H1 (cell line): ENCODE measurements at regions of chr5 and their contacts with region 1.

Region 1: GRCh38 chr5:97142521-97143254 is at the start of gene LIX1:
- DNase-seq: peak in 1 of 2 experiments; percentile 62
- H3K4me3 ChIP-seq: peak within 1 kb of the TSS in 1 of 4 experiments; percentile 12; a peak in 3 of 8 replicates
- H3K27ac ChIP-seq: no peak within 1 kb of the TSS
- H3K4me1 ChIP-seq: peaks cover 0 to 6% (median 2%) of the 10 kb centered on the region in 4 experiments; a peak in 4 of 7 replicates
- H3K27me3 ChIP-seq: no peaks in the 10 kb centered on the region
- CTCF ChIP-seq: peak; percentile 23 to 76 (median 70)
- EP300 ChIP-seq: no peak
- POLR2A ChIP-seq: no peak
- RAD21 ChIP-seq: peak; percentile 91 to 93
- total RNA-seq, gene LIX1: 0.26 and 0.33 TPM in 2 replicates

Region 2: DNA sequence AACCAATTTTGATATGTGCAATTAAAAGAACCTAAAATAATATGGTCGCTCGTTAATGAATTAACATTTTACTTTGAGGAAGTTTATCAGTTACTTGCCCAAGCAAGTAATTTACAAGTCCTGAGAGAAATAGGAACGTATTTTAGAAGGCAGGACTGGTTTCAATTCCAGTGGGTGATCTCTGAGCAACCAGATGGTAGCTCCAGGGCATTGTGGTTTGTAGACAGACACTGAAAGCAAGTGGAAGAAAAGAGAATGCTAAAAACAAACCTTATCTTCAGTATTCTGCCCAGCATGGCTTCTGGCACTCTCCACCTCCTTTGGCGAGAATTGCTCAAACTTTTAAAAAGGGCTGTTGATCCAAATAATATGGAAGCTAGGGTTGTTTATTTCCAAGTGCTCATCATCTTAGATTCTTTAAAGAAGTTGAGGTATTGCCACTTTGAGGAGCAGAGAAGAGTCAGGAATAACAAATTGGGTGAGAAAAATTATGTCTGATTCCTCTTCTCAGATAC is 298.2 kb before region 1 on chr5:
- CTCF ChIA-PET with region 1: no interaction called
- POLR2A ChIA-PET with region 1: no interaction called
- DNase-seq: no peak
- H3K4me3 ChIP-seq: no peak overlapping the region
- H3K27ac ChIP-seq: no peak overlapping the region
- H3K4me1 ChIP-seq: no peaks in the 10 kb centered on the region
- H3K27me3 ChIP-seq: no peaks in the 10 kb centered on the region
- CTCF ChIP-seq: no peak
- EP300 ChIP-seq: no peak
- POLR2A ChIP-seq: no peak
- RAD21 ChIP-seq: no peak

Region 3: DNA sequence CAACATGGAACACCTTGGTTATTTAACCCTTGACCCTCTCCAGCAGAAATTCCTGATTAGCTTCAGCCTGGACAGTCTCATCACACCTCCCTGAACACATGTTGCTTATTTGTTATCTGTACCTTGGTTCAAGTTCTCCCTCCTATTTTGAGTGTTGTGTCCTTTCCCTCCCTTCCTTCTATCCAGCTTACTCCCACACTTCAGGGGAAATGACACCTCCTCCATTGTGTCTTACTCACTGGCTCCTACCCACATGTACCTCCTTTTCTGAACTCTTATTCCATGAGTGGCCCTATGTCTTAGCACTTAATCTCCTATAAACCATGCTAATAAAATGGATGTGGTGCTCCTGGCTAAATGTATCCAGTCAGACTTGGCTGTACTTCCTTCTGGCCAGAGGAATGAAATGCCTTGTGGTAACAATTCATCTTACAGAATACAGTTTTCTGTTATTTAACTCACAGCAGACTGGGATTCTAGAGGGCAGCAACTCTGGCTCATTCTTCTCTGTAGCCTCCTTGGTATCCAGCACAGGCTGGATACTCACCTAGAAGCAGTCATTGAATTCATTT is 11.5 kb before region 1 on chr5:
- CTCF ChIA-PET with region 1: interaction called, 13 read pairs
- POLR2A ChIA-PET with region 1: no interaction called
- DNase-seq: no peak
- H3K4me3 ChIP-seq: no peak overlapping the region
- H3K27ac ChIP-seq: no peak overlapping the region
- H3K4me1 ChIP-seq: peaks cover 0 to 7% (median 5%) of the 10 kb centered on the region in 4 experiments; a peak in 2 of 7 replicates
- H3K27me3 ChIP-seq: no peaks in the 10 kb centered on the region
- CTCF ChIP-seq: no peak
- EP300 ChIP-seq: no peak
- POLR2A ChIP-seq: no peak
- RAD21 ChIP-seq: no peak